Activated CD4-positive, alpha-beta T cell treated with anti-CD3 and anti-CD28 coated beads for 36 hours (primary cell): ENCODE measurements at regions of chr10 and their contacts with region 1.

Region 1: DNA sequence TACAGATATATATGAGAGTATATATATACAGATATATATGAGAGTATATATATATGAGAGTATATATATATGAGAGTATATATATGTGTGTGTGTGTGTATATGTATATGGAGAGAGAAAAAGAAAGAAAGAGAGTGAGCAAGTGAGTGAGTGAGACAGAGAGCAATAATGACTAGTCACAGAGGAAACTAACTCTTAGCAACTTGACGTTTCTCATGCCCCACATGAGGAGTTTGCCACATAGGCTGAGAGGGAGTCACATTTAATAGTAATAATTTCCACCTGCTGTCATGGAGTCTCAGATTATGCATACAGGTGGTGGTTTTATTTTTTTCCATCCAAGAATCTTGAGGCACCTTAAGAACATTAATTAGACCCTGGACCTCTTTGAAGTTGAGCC is 199.9 kb downstream of the GATA3 start:
- DNase-seq: peak; percentile 57
- ATAC-seq: peak; percentile 96
- H3K4me3 Mint-ChIP-seq: no peak overlapping the region
- H3K27ac Mint-ChIP-seq: peak overlapping the region; percentile 92
- H3K4me1 Mint-ChIP-seq: peaks cover 22% of the 10 kb centered on the region
- H3K27me3 Mint-ChIP-seq: no peaks in the 10 kb centered on the region

Region 2: DNA sequence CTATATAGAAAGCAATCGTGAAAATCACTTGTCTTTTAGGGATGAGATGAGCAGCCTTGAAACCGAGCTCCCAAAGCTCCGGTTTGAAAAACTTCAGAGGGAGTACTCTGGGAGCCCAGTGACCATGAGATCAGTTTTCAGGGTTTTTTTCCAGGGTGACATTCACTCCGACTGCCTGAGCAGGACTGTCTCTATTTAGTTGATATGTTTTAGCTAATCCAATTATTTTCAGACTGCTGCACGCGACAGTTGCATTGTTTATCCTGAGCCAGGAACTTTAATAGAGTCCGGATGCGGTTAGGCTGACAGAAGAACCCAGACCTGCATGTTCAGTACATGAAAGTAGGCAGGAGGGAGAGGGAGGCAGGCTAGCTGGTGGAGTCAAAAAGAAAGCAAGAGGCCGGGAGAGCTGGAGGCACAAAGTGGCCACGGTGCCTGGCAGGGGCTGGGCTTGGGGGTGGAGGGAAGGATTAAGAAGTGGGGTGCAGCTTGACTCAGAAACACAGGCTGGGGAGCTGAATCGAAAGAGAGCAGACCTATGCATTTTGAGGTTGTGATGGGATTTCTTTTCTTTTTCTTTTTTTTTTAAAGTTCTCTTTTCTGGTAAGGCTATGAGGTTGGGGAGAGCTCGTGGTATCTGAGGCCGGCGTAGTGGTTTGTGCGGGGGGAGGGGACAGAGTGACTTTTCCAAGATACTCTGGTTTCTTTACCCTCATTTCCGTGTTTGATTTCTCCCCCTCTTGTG is 194.2 kb before region 1 on chr10:
- CTCF ChIA-PET with region 1: interaction called, 3 read pairs
- POLR2A ChIA-PET with region 1: no interaction called
- intact Hi-C with region 1: loop called in 1 of 2 experiments (anchors 2 kb)
- DNase-seq: peak; percentile 83
- ATAC-seq: peak; percentile 55
- H3K4me3 Mint-ChIP-seq: peak overlapping the region; percentile 96
- H3K27ac Mint-ChIP-seq: peak overlapping the region; percentile 81
- H3K4me1 Mint-ChIP-seq: peaks cover 77% of the 10 kb centered on the region
- H3K27me3 Mint-ChIP-seq: no peaks in the 10 kb centered on the region

Region 3: DNA sequence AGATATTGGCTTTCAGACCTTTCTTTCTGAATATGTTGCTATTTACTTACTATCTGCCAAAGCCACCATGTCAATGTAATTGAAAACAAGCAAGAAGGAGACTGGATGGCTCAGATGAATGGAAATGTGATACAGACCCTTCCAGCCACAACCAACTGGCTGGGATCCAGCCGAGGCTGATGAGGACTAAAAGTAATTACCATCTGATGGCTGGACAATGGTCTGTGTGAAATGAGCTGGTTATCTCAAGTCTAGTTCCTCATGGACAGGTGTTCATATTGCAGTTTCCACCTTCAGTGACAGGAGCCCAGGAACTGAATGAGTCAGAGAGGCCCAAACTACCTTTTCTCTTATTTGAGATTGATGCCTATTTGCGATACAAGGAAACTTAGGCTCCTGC is 67.6 kb after region 1 on chr10:
- CTCF ChIA-PET with region 1: no interaction called
- POLR2A ChIA-PET with region 1: interaction called, 3 read pairs
- intact Hi-C with region 1: loop called in 1 of 2 experiments (anchors 2 kb)
- DNase-seq: no peak
- ATAC-seq: no peak
- H3K4me3 Mint-ChIP-seq: no peak overlapping the region
- H3K27ac Mint-ChIP-seq: no peak overlapping the region
- H3K4me1 Mint-ChIP-seq: peaks cover 32% of the 10 kb centered on the region
- H3K27me3 Mint-ChIP-seq: peaks cover 2% of the 10 kb centered on the region

Region 4: GRCh38 chr10:8331883-8332729 is 77.8 kb after region 1 on chr10:
- CTCF ChIA-PET with region 1: no interaction called
- POLR2A ChIA-PET with region 1: no interaction called
- intact Hi-C with region 1: no loop called
- DNase-seq: peak; percentile 89
- ATAC-seq: peak; percentile 94
- H3K4me3 Mint-ChIP-seq: peak overlapping the region; percentile 79
- H3K27ac Mint-ChIP-seq: peak overlapping the region; percentile 78
- H3K4me1 Mint-ChIP-seq: peaks cover 60% of the 10 kb centered on the region
- H3K27me3 Mint-ChIP-seq: peaks cover 2% of the 10 kb centered on the region

Region 5: GRCh38 chr10:8577686-8578085 is 323.3 kb after region 1 on chr10:
- CTCF ChIA-PET with region 1: no interaction called
- POLR2A ChIA-PET with region 1: no interaction called
- intact Hi-C with region 1: loop called (anchors 5 to 10 kb)
- DNase-seq: peak; percentile 12
- ATAC-seq: peak; percentile 71
- H3K4me3 Mint-ChIP-seq: no peak overlapping the region
- H3K27ac Mint-ChIP-seq: peak overlapping the region; percentile 59
- H3K4me1 Mint-ChIP-seq: peaks cover 36% of the 10 kb centered on the region
- H3K27me3 Mint-ChIP-seq: peaks cover 31% of the 10 kb centered on the region

Region 6: DNA sequence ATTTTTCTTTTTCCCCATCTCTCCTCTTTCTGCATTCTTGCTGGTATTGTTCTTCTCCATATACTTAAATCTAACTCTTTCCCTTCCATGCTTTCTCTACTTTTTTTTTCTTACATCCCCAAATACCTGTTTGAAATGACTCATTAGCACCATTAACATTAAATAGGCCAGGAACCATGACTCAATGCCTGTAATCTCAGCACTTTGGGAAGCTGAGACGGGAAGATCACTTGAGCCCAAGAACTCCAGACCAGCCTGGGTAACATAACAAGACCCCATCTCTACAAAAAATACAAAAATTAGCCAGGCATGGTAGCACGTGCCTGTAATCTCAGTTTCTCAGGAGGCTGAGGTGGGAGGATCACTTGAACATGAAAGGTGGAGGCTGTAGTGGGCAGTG is 826.9 kb after region 1 on chr10:
- CTCF ChIA-PET with region 1: no interaction called
- POLR2A ChIA-PET with region 1: no interaction called
- intact Hi-C with region 1: loop called in 1 of 2 experiments (anchors 2 kb)
- DNase-seq: no peak
- ATAC-seq: no peak
- H3K4me3 Mint-ChIP-seq: no peak overlapping the region
- H3K27ac Mint-ChIP-seq: no peak overlapping the region
- H3K4me1 Mint-ChIP-seq: peaks cover 29% of the 10 kb centered on the region
- H3K27me3 Mint-ChIP-seq: peaks cover 16% of the 10 kb centered on the region